Natural killer cell (primary cell): ENCODE measurements at regions of chr10 and their contacts with region 1.

Region 1: DNA sequence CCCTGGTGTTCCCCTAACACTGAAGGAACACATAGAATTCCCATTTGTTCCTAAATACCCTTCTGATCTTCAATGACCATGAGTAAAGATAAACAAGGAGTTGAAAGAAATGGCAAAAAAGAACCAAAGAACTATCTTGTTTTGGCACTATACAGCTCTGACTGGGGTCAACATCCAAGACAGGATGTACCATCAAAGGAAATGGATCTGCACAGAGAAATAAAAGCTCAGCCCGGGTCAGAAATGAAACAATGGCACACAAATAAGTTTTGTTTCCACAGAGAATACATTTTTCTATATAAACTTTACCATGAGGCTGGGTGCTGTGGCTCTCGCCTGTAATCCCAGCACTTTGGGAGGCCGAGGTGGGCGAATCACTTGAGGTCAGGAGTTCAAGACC is 18.0 kb upstream of the USP54 start:
- DNase-seq: no peak
- ATAC-seq: no peak
- H3K4me3 ChIP-seq: no peak overlapping the region
- H3K4me3 Mint-ChIP-seq: no peak overlapping the region
- H3K27ac ChIP-seq: no peak overlapping the region
- H3K27ac Mint-ChIP-seq: no peak overlapping the region
- H3K4me1 ChIP-seq: no peaks in the 10 kb centered on the region
- H3K4me1 Mint-ChIP-seq: no peaks in the 10 kb centered on the region
- H3K27me3 ChIP-seq: no peaks in the 10 kb centered on the region
- H3K27me3 Mint-ChIP-seq: no peaks in the 10 kb centered on the region
- CTCF ChIP-seq: no peak

Region 2: GRCh38 chr10:73625884-73626752 is 17.0 kb after region 1 on chr10:
- intact Hi-C with region 1: loop called (anchors 1 kb)
- DNase-seq: peak; percentile 89 to 98
- ATAC-seq: peak; percentile 95 to 98 (median 96)
- H3K4me3 ChIP-seq: peak overlapping the region; percentile 51
- H3K4me3 Mint-ChIP-seq: peak overlapping the region; percentile 98
- H3K27ac ChIP-seq: peak overlapping the region; percentile 32
- H3K27ac Mint-ChIP-seq: peak overlapping the region; percentile 93 to 99
- H3K4me1 ChIP-seq: peaks cover 7% of the 10 kb centered on the region
- H3K4me1 Mint-ChIP-seq: peaks cover 9 to 22% of the 10 kb centered on the region in 2 donors
- H3K27me3 ChIP-seq: no peaks in the 10 kb centered on the region
- H3K27me3 Mint-ChIP-seq: no peaks in the 10 kb centered on the region
- CTCF ChIP-seq: no peak